ENCODE measurements at regions of chr12 and their contacts with region 1.

Region 1: DNA sequence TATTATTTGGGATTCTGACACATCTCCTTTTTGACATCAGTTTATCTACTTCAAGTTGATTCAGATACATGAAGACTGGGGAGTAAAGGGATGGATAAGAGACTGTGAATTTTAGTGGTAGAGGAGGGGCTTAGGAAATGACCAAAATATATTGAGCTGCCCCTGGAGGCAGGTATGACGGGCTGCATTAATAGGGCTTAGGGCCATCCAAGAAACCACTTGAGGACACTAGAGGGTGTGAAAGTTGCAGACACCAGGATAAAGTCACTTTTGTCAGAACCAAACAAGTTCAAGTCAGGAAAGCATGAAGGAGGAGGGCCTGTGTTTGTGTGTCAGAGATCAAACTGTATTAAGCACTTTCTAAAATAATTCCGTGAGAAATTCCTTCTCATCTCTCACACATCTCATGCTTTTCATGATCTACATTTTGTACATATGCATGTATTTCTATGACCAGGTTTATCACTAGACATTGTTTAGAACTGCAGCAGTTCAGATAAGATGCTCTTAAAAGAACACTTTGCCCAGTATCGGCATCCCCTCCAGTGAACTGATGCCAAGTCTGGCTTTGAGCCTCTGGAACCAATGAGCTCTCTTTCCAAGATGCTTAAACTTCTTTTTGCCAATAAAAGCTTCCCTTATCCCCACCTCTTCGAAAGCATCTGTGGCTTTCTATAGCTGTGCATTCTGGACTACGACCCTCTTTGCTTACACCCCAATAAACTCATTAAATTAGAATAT is 136.9 kb downstream of the SLC38A1 start:
- DNase-seq: no peak
- ATAC-seq: no peak
- H3K4me3 Mint-ChIP-seq: no peak overlapping the region
- H3K27ac Mint-ChIP-seq: no peak overlapping the region
- H3K4me1 Mint-ChIP-seq: no peaks in the 10 kb centered on the region
- H3K27me3 Mint-ChIP-seq: peaks cover 3% of the 10 kb centered on the region

Region 2: DNA sequence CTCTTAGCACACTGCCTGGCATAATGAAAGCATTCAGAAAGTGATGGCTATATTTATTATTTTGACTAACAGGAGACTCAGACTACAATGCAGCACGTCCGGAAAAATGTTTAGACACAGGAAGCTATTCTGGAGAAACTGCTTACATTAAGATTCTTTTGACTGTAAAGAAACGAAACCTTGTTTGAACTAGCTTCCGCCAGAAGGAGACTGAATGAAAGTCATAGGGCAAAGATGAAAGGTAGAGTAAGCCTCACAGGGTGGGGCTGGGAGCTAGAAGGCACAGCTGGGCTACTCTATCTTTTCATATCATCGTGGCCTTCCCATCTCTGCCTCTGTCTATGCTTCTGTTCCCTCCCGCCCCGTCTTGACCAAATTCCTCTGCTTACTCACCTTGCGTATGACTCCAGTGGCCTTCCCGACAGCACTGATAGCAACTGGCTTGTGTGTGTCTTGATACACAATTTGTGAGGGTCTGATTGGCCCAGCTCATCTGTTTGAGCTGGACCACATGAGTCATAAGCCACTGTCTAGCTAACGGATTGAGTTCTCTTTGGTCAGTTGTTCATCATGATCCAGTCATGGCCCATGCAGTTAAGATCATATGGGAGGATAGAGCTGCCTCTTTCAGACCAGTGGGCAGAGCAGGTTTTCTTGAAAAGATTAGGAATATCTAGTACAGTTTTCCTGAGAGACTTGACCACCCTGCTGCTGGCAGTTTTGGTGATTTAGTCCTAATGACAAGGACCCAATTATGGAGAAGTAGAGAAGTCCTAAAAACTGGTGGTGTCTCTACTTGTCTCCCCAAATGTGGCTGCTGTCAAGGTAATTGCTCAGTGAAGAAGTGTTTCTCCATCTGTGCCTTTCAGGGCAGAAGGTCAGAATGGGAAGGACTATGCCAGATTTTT is 392.2 kb after region 1 on chr12:
- CTCF ChIA-PET with region 1: no interaction called
- POLR2A ChIA-PET with region 1: no interaction called
- intact Hi-C with region 1: no loop called
- DNase-seq: peak; percentile 66
- ATAC-seq: peak; percentile 89
- H3K4me3 Mint-ChIP-seq: peak overlapping the region; percentile 57
- H3K27ac Mint-ChIP-seq: peak overlapping the region; percentile 91
- H3K4me1 Mint-ChIP-seq: peaks cover 43% of the 10 kb centered on the region
- H3K27me3 Mint-ChIP-seq: no peaks in the 10 kb centered on the region

Region 3: GRCh38 chr12:46933947-46934346 is 802.0 kb after region 1 on chr12:
- CTCF ChIA-PET with region 1: no interaction called
- POLR2A ChIA-PET with region 1: no interaction called
- intact Hi-C with region 1: loop called in 1 of 2 experiments (anchors 5 kb)
- DNase-seq: no peak
- ATAC-seq: no peak
- H3K4me3 Mint-ChIP-seq: no peak overlapping the region
- H3K27ac Mint-ChIP-seq: no peak overlapping the region
- H3K4me1 Mint-ChIP-seq: no peaks in the 10 kb centered on the region
- H3K27me3 Mint-ChIP-seq: peaks cover 18% of the 10 kb centered on the region